ENCODE measurements at regions of chr11 and their contacts with region 1.

Region 1: GRCh38 chr11:32583459-32584271 is at the start of gene EIF3M:
- DNase-seq: peak; percentile 98
- H3K4me3 ChIP-seq: peak within 1 kb of the TSS; percentile 98
- H3K27ac ChIP-seq: peak within 1 kb of the TSS; percentile 72
- H3K4me1 ChIP-seq: peaks cover 32% of the 10 kb centered on the region
- CTCF ChIP-seq: no peak
- total RNA-seq, gene EIF3M: 377 and 385 TPM in 2 replicates

Region 2: GRCh38 chr11:32391956-32392553 is 191.6 kb before region 1 on chr11:
- CTCF ChIA-PET with region 1: no interaction called
- POLR2A ChIA-PET with region 1: no interaction called
- intact Hi-C with region 1: no loop called
- DNase-seq: no peak
- H3K4me3 ChIP-seq: no peak overlapping the region
- H3K27ac ChIP-seq: no peak overlapping the region
- H3K4me1 ChIP-seq: no peaks in the 10 kb centered on the region
- CTCF ChIP-seq: no peak

Region 3: DNA sequence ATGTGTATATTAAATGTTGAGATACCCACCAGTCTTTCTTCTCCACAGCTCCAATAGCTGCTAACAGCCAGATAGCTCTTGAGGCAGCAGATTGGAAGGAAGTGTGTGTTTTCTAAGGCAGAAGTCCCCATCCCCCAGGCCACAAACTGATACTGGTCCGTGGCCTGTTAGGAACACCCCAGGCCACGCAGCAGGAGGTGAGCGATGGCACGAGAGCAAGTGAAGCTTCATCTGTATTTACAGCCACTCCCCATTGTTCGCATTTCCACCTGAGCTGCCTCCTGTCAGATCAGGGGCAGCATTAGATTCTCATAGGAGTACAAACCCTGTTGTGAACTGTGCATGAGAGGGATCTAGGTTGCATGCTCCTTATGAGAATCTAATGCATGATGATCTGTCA is 198.1 kb after region 1 on chr11:
- CTCF ChIA-PET with region 1: no interaction called
- POLR2A ChIA-PET with region 1: interaction called, 4 read pairs
- intact Hi-C with region 1: loop called (anchors 5 kb)
- DNase-seq: no peak
- H3K4me3 ChIP-seq: no peak overlapping the region
- H3K27ac ChIP-seq: no peak overlapping the region
- H3K4me1 ChIP-seq: peaks cover 11% of the 10 kb centered on the region
- CTCF ChIP-seq: no peak

Region 4: DNA sequence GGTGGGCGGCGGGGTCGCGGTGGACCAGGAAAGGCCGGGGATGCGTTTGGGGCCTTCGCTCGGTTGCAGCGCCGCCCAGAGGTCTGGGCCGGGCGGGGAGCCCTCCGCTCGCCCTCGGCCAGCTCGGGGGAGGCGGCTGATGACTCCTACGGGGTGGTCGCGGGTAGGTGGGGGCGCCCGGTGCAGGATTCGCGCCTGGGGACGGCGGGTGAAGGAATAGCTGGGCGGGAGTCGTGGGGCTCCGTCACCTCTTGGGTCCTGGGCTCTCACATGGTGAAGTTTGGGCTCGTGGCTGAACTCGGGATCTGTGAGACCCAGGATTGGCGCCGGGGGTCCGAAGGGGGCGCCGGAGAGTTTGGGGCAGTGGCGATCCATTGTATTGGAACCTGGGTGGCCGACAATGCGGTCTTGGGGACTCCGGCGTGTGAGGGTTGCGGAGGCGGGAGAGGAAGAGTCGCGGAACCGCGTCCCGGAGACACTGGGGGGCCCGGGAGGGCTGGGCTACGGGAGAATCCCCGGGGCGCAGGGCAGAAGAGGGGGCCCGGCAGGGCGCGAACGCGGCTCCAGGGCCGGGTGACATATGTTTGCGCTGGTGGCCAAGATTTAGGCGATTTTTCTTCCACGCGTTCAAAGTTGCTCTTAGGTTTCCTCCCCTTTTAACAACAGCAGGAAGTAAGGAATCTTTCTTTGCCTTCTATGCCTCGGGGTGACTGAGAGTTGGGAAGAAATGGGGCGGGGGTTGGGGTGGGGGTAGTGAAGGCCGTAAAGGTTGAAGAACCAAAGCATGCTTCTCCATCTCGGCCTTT is 309.9 kb after region 1 on chr11:
- CTCF ChIA-PET with region 1: no interaction called
- POLR2A ChIA-PET with region 1: no interaction called
- intact Hi-C with region 1: loop called (anchors 10 kb)
- DNase-seq: peak; percentile 80
- H3K4me3 ChIP-seq: peak overlapping the region; percentile 86
- H3K27ac ChIP-seq: peak overlapping the region; percentile 82
- H3K4me1 ChIP-seq: peaks cover 26% of the 10 kb centered on the region
- CTCF ChIP-seq: peak; percentile 80